ENCODE measurements at regions of chr21 and their contacts with region 1.

Region 1: DNA sequence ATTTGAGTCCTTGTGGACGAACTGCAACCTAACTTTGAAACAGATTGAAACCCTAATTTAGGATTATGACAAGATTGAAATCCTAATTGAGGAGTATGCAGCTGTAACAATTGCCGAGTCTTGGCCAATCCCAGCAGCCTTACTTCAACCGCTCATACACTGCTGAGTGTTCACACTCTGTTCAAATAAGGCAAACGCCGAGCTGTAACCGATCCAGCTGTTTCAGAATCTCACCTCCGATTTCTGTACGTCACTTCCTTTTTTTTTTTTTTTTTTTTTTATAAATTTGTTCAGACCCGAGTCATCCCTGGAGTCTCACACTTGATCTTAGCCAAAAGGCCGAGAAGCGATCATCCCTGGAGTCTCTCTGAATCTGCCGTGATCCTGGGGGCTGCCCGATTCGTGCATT is 22.3 kb upstream of the ATP5PO start:
- DNase-seq: peak in 4 of 5 donors; percentile 42 to 77 (median 58)
- H3K4me3 ChIP-seq: no peak overlapping the region
- H3K4me3 Mint-ChIP-seq: peak overlapping the region; percentile 58 to 100 (median 93)
- H3K27ac ChIP-seq: peak overlapping the region; percentile 60
- H3K27ac Mint-ChIP-seq: peak overlapping the region; percentile 91 to 100 (median 98)
- H3K4me1 ChIP-seq: peaks cover 88% of the 10 kb centered on the region
- H3K4me1 Mint-ChIP-seq: peaks cover 65 to 88% (median 74%) of the 10 kb centered on the region in 3 donors
- H3K27me3 ChIP-seq: no peaks in the 10 kb centered on the region
- H3K27me3 Mint-ChIP-seq: no peaks in the 10 kb centered on the region

Region 2: GRCh38 chr21:32653311-32653901 is 1284.5 kb before region 1 on chr21:
- CTCF ChIA-PET with region 1: no interaction called
- POLR2A ChIA-PET with region 1: no interaction called
- DNase-seq: peak in 2 of 5 donors; percentile 2 to 18
- H3K4me3 ChIP-seq: no peak overlapping the region
- H3K4me3 Mint-ChIP-seq: no peak overlapping the region
- H3K27ac ChIP-seq: no peak overlapping the region
- H3K27ac Mint-ChIP-seq: peak overlapping the region in 2 of 8 donors; percentile 6 to 13
- H3K4me1 ChIP-seq: no peaks in the 10 kb centered on the region
- H3K4me1 Mint-ChIP-seq: no peaks in the 10 kb centered on the region
- H3K27me3 ChIP-seq: no peaks in the 10 kb centered on the region
- H3K27me3 Mint-ChIP-seq: no peaks in the 10 kb centered on the region

Region 3: DNA sequence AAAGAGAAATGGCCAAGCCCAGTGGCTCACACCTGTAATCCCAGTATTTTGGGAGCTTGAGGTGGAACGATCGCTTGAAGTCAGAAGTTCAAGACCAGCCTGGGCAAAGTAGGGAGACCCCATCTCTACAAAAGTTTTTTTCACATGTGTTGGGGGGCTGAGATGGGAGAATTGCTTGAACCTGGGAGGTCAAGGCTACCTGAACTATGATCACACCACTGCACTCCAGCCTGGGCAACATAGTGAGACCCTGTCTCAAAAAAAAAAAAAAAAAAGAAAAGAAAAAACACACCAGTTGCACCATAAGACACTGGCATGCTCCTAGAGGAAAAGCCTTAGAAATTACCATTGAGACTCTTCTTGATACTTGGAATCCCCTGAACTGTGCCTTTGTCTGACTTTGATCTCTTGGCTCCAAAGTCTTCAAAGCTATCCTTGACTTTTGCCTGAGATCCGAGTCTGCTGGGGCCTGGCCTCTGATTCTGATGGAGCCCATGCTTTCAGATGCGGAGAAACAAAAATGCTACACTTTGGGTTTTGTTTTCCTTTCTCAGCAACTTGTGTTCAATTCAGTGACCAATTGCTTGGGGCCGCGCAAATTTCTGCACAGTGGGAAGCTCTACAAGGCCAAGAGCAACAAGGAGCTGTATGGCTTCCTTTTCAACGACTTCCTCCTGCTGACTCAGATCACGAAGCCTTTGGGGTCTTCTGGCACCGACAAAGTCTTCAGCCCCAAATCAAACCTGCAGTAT is 56.1 kb before region 1 on chr21:
- CTCF ChIA-PET with region 1: no interaction called
- POLR2A ChIA-PET with region 1: no interaction called
- DNase-seq: no peak
- H3K4me3 ChIP-seq: no peak overlapping the region
- H3K4me3 Mint-ChIP-seq: no peak overlapping the region
- H3K27ac ChIP-seq: no peak overlapping the region
- H3K27ac Mint-ChIP-seq: no peak overlapping the region
- H3K4me1 ChIP-seq: no peaks in the 10 kb centered on the region
- H3K4me1 Mint-ChIP-seq: no peaks in the 10 kb centered on the region
- H3K27me3 ChIP-seq: no peaks in the 10 kb centered on the region
- H3K27me3 Mint-ChIP-seq: peaks cover 2 to 19% of the 10 kb centered on the region in 2 donors

Region 4: DNA sequence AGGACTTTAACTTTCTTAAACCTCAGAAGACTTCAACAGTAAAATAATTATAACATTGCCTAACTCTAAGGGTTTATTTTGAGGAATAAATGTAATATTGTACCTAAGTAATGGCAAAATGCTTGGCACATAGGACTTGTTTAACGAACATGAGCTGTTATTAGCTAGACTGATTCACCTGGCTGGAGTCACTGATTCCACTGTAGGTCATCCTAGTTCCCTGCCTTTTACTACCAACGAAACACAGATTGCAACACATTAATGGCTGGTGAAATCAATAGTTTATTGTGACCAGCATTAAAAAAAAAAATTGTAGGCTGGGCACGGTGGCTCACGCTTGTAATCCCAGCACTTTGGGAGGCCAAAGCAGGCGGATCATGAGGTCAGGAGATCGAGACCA is 23.1 kb after region 1 on chr21:
- CTCF ChIA-PET with region 1: no interaction called
- POLR2A ChIA-PET with region 1: interaction called, 10 read pairs
- DNase-seq: no peak
- H3K4me3 ChIP-seq: no peak overlapping the region
- H3K4me3 Mint-ChIP-seq: no peak overlapping the region
- H3K27ac ChIP-seq: no peak overlapping the region
- H3K27ac Mint-ChIP-seq: peak overlapping the region in 1 of 8 donors; percentile 66
- H3K4me1 ChIP-seq: peaks cover 12% of the 10 kb centered on the region
- H3K4me1 Mint-ChIP-seq: peaks cover 29 to 65% (median 58%) of the 10 kb centered on the region in 3 donors
- H3K27me3 ChIP-seq: no peaks in the 10 kb centered on the region
- H3K27me3 Mint-ChIP-seq: no peaks in the 10 kb centered on the region

Region 5: GRCh38 chr21:35924714-35925301 is 1986.9 kb after region 1 on chr21:
- CTCF ChIA-PET with region 1: no interaction called
- POLR2A ChIA-PET with region 1: interaction called, 10 read pairs
- DNase-seq: no peak
- H3K4me3 ChIP-seq: no peak overlapping the region
- H3K4me3 Mint-ChIP-seq: no peak overlapping the region
- H3K27ac ChIP-seq: no peak overlapping the region
- H3K27ac Mint-ChIP-seq: no peak overlapping the region
- H3K4me1 ChIP-seq: no peaks in the 10 kb centered on the region
- H3K4me1 Mint-ChIP-seq: no peaks in the 10 kb centered on the region
- H3K27me3 ChIP-seq: no peaks in the 10 kb centered on the region
- H3K27me3 Mint-ChIP-seq: peaks cover 16 to 53% of the 10 kb centered on the region in 2 donors